ENCODE measurements at regions of chr12 and their contacts with region 1.

Region 1: DNA sequence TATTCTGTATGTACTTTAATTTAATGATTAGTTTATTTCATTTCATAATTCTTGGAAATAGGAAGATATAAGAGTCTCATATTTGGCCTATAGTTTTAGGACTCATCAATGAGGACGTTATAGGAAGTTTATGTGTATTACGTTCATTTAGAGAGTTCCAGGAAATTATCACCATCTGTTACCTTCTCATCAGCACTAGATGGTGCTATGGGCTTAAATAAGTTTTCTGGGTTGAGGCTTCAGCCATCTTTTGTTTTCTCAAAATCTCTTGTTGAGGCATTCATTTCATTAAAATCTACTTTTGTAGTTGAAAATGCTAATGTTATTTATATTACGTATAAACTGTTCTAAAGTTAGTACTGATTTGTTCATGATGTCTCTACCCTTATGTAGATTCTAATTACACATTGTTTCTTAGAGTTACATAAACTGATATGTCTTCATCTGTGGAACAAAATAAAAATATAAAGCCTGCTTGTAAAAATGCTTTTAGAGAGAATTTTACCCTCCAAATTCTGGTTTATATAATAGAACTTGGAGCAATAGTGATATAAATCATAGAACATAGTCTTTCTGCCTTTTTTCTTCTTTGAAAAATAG is 89.2 kb downstream of the CFAP54 start:
- DNase-seq: no peak
- ATAC-seq: no peak
- H3K4me3 ChIP-seq: no peak overlapping the region
- H3K27ac ChIP-seq: no peak overlapping the region
- H3K4me1 ChIP-seq: no peaks in the 10 kb centered on the region
- H3K27me3 ChIP-seq: no peaks in the 10 kb centered on the region
- CTCF ChIP-seq: peak; percentile 11 to 73 (median 59)
- POLR2A ChIP-seq: no peak

Region 2: GRCh38 chr12:96225044-96225855 is 353.4 kb before region 1 on chr12:
- intact Hi-C with region 1: no loop called
- DNase-seq: peak in 1 of 4 donors; percentile 52
- ATAC-seq: no peak
- H3K4me3 ChIP-seq: no peak overlapping the region
- H3K27ac ChIP-seq: no peak overlapping the region
- H3K4me1 ChIP-seq: peaks cover 19% of the 10 kb centered on the region
- H3K27me3 ChIP-seq: no peaks in the 10 kb centered on the region
- CTCF ChIP-seq: no peak
- POLR2A ChIP-seq: no peak

Region 3: GRCh38 chr12:98397316-98398105 is 1818.9 kb after region 1 on chr12:
- intact Hi-C with region 1: loop called (anchors 5 kb)
- DNase-seq: peak; percentile 82 to 87 (median 84)
- ATAC-seq: peak; percentile 98
- H3K4me3 ChIP-seq: no peak overlapping the region
- H3K27ac ChIP-seq: peak overlapping the region in 2 of 4 donors; percentile 46 to 56
- H3K4me1 ChIP-seq: peaks cover 4% of the 10 kb centered on the region
- H3K27me3 ChIP-seq: no peaks in the 10 kb centered on the region
- CTCF ChIP-seq: peak; percentile 72 to 92 (median 90)
- POLR2A ChIP-seq: no peak

Measured in body of pancreas (tissue), 4 donors.